Heart right ventricle (tissue), 16 donors: ENCODE measurements at regions of chr11 and their contacts with region 1.

Region 1: DNA sequence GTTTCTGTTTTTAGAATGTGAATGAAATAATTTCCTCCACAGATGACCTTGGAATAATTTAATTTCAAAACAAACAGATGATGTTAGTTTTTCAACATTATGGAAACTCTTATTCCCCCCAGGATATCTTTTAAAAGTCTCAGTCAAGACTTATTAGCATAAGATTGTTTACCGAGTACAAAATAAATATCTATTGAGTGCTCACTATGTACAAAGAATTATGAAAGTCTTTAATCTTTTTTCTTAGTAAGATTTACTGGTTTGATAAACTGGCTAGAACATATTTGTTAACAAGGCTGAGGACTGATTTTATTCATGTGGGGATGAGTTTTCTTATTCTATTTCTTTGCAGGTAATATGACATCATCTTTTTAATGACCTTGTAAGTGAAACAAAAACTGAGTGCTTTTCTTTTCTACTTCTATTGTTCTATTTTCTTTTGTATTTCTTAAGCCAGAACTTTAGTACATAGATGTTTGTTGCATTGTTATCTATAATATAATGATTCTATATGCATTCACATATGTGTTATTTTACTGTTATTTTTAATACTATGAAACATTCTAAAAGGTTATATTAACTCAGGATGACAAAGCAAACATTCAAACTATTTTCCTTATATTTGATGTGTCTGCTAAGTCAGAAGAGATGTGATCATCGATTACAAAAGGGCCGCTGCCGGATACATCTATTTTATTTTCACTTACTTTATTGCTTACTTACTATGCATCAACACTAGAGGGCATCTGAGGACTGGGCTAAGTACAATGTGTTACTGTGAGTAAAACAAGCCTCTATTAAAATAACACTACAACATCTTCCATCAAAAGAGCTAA is 111.0 kb upstream of the ARHGAP42 start:
- DNase-seq: peak in 1 of 2 donors; percentile 22
- ATAC-seq: peak in 7 of 8 donors; percentile 47 to 91 (median 74)
- H3K4me3 ChIP-seq: peak overlapping the region in 1 of 10 donors; percentile 14
- H3K27ac ChIP-seq: no peak overlapping the region
- H3K4me1 ChIP-seq: peaks cover 0 to 11% (median 0%) of the 10 kb centered on the region in 9 donors
- H3K27me3 ChIP-seq: no peaks in the 10 kb centered on the region
- CTCF ChIP-seq: peak; percentile 59 to 91 (median 77)

Region 2: GRCh38 chr11:100632941-100633452 is 56.9 kb after region 1 on chr11:
- intact Hi-C with region 1: loop called in 2 of 10 experiments (anchors 5 kb)
- DNase-seq: peak; percentile 43 to 80
- ATAC-seq: peak; percentile 79 to 96 (median 91)
- H3K4me3 ChIP-seq: no peak overlapping the region
- H3K27ac ChIP-seq: peak overlapping the region; percentile 8 to 82 (median 62)
- H3K4me1 ChIP-seq: peaks cover 0 to 38% (median 13%) of the 10 kb centered on the region in 9 donors
- H3K27me3 ChIP-seq: no peaks in the 10 kb centered on the region
- CTCF ChIP-seq: no peak

Region 3: DNA sequence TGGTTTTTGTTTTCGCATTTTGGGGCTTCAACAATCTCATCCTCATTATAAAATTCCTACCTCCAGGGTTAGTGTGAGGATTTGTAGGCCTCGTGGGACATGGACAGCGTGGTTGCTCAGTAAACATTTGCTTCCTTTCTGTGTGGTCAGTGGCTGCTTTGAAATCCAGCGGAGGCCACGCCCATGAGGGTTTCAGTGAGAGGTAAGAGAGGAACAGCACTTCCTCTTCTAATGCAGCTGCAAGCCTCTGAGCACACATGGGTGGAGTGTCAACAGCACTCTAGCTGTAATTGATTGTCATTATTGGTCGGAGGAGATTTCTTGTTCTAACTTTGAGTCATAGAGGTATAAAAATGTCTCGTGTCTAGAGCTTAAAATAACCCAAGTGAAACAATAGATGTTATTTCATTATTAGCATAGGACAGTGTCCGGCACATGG is 105.0 kb after region 1 on chr11:
- intact Hi-C with region 1: loop called in 8 of 10 experiments (anchors 5 to 10 kb)
- DNase-seq: peak; percentile 33 to 37
- ATAC-seq: peak in 7 of 8 donors; percentile 41 to 78 (median 57)
- H3K4me3 ChIP-seq: no peak overlapping the region
- H3K27ac ChIP-seq: peak overlapping the region in 1 of 10 donors; percentile 3
- H3K4me1 ChIP-seq: peaks cover 0 to 35% (median 10%) of the 10 kb centered on the region in 9 donors
- H3K27me3 ChIP-seq: no peaks in the 10 kb centered on the region
- CTCF ChIP-seq: no peak

Region 4: GRCh38 chr11:100849009-100849900 is 273.2 kb after region 1 on chr11:
- intact Hi-C with region 1: loop called in 8 of 10 experiments (anchors 1 to 5 kb)
- DNase-seq: no peak
- ATAC-seq: peak in 7 of 8 donors; percentile 60 to 75 (median 70)
- H3K4me3 ChIP-seq: no peak overlapping the region
- H3K27ac ChIP-seq: peak overlapping the region in 8 of 10 donors; percentile 22 to 72 (median 48)
- H3K4me1 ChIP-seq: peaks cover 0 to 36% (median 18%) of the 10 kb centered on the region in 9 donors
- H3K27me3 ChIP-seq: no peaks in the 10 kb centered on the region
- CTCF ChIP-seq: no peak

Region 5: DNA sequence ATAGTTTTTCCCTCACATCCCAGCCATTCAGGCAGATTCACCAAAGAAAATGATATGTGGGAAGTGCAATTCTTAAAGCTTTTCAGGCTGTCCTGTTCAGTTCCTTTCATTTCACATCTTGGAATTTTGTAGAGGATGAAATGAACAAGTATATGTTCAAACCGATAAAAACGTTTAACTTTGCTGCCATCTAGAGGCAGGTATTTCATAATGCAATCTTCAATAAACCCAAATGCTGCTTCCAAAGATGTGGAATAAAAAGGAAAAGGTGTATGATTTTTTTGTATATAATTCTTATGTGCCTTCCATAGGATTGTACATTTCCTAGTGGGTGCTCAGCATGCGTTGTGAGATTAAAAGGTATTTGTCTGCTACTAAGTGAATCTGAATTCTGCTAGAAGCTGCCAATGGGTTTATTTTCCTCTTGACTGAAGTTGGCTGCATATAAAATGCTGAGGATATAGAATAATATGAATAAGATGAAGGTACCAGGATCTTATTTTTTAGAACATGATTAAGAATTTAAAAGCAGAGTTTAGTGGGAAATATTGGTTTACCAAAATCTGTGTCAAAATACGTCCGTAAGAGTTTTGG is 354.2 kb after region 1 on chr11:
- intact Hi-C with region 1: loop called (anchors 1 to 10 kb)
- DNase-seq: peak in 1 of 2 donors; percentile 11
- ATAC-seq: peak in 4 of 8 donors; percentile 34 to 67 (median 62)
- H3K4me3 ChIP-seq: no peak overlapping the region
- H3K27ac ChIP-seq: no peak overlapping the region
- H3K4me1 ChIP-seq: peaks cover 0 to 17% (median 0%) of the 10 kb centered on the region in 9 donors
- H3K27me3 ChIP-seq: no peaks in the 10 kb centered on the region
- CTCF ChIP-seq: peak; percentile 42 to 76 (median 68)